ENCODE measurements at regions of chr19 and their contacts with region 1.

Region 1: DNA sequence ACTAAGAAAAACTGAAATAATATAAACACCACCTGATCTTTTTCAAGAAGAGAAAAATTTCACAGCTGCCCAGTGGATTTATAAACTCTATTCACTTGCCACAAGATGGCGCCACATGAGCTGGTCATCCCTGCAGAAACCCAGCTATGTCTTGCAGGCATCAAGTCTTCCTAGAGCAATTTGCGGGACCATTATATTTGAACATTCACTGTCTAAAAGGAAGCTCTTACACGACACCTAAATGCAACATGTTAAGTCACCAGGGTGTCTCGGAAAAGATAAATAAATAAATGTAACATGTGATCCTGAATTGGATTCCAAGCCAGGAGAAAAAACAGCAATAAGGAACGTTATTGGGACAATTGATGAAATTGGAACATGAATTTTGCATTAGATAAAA is 20.3 kb upstream of the AKT2 start:
- DNase-seq: peak; percentile 82
- H3K4me3 ChIP-seq: no peak overlapping the region
- H3K27ac ChIP-seq: no peak overlapping the region
- H3K4me1 ChIP-seq: no peaks in the 10 kb centered on the region
- H3K27me3 ChIP-seq: no peaks in the 10 kb centered on the region
- CTCF ChIP-seq: peak; percentile 66 to 68
- POLR2A ChIP-seq: no peak

Region 2: GRCh38 chr19:40285353-40286234 is 19.8 kb before region 1 on chr19:
- CTCF ChIA-PET with region 1: interaction called, 12 read pairs
- POLR2A ChIA-PET with region 1: no interaction called
- dilution Hi-C with region 1: no loop called
- intact Hi-C with region 1: no loop called
- DNase-seq: peak; percentile 100
- H3K4me3 ChIP-seq: peak overlapping the region in 2 of 3 experiments; percentile 40 to 86
- H3K27ac ChIP-seq: peak overlapping the region; percentile 76
- H3K4me1 ChIP-seq: peaks cover 11% of the 10 kb centered on the region
- H3K27me3 ChIP-seq: no peaks in the 10 kb centered on the region
- CTCF ChIP-seq: no peak
- POLR2A ChIP-seq: peak; percentile 43

Region 3: DNA sequence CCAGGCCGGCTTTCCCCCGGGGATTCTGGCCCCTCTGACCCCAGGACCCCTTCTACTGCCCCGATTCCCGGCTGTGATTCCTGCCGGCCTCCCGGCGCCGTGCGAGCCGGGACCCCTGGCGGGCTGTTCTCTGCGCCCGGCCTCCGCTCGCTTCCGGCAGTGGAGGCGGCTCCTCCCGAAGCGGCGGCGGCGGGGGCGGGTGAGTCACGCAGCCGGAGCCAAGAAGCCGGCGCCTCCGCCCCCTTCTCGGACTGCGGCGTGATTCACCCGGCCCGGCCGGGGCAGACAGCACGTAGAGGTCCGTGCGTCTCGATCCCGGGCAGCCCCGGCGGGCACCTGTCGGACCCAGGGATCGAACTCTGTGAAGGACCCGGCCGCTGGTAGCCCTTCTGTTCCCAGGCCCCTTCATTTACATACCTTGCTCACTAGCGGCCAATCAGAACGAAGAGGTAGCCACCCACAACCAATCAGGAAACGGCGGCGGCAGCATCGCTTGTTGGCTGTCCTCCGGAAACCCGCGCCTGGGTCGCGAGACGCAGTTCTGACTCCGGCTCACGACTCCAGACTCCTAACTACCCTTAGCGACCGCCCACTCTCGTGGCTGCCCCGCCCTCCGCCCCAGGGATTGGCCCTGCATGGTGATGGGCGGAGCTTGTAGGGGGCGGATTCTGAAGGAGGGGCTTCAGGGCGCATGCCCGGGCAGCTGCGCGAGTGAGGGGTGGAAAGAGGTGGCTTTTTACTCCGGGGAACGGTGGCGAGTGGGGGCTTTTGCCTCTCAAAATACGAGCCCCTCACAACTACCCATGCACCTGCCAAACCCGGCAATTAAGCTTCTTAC is 120.3 kb after region 1 on chr19 and contains the start of gene SERTAD1:
- CTCF ChIA-PET with region 1: interaction called, 17 read pairs
- POLR2A ChIA-PET with region 1: interaction called, 6 read pairs
- dilution Hi-C with region 1: no loop called
- intact Hi-C with region 1: no loop called
- DNase-seq: peak; percentile 99
- H3K4me3 ChIP-seq: peak within 1 kb of the TSS; percentile 80 to 95 (median 93)
- H3K27ac ChIP-seq: peak within 1 kb of the TSS; percentile 95
- H3K4me1 ChIP-seq: peaks cover 19% of the 10 kb centered on the region
- H3K27me3 ChIP-seq: no peaks in the 10 kb centered on the region
- CTCF ChIP-seq: peak; percentile 40 to 74
- POLR2A ChIP-seq: peak; percentile 99
- total RNA-seq, gene SERTAD1: 8.8 and 10.0 TPM in 2 replicates

Region 4: DNA sequence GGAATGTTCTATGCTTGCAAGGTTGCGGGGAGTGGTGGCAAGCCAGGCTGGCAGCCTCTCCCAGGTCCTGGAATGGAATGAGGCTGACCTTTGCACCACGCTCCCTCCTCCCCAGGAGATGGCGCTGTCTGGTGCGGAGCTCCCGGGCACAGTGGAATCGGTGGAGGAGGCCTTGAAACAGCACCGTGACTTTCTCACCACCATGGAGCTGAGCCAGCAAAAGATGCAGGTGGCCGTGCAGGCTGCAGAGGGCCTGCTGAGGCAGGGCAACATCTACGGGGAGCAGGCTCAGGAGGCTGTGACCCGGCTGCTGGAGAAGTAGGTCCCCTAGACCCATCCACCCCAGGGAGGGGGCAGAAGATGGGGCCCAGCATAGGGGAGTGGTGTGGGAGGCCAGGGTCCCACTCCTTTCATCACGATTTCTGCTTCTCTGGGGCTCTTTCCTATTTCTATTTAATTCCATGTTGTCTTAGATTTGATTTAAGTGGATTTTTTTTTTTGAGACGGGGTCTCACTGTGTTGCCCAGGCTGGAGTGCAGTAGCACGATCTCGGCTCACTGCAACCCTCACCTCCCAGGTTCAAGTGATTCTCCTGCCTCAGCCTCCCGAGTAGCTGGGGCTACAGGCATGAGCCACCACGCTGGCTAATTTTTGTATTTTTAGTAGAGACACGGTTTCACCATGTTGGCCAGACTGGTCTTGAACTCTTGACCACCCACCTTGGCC is 218.1 kb after region 1 on chr19:
- CTCF ChIA-PET with region 1: interaction called, 32 read pairs
- POLR2A ChIA-PET with region 1: no interaction called
- dilution Hi-C with region 1: no loop called
- intact Hi-C with region 1: loop called (anchors 1 kb)
- DNase-seq: peak; percentile 49
- H3K4me3 ChIP-seq: no peak overlapping the region
- H3K27ac ChIP-seq: no peak overlapping the region
- H3K4me1 ChIP-seq: no peaks in the 10 kb centered on the region
- H3K27me3 ChIP-seq: peaks cover 2 to 7% of the 10 kb centered on the region in 2 experiments
- CTCF ChIP-seq: peak; percentile 67 to 84
- POLR2A ChIP-seq: no peak

Region 5: GRCh38 chr19:40598121-40598917 is 292.9 kb after region 1 on chr19:
- CTCF ChIA-PET with region 1: interaction called, 21 read pairs
- POLR2A ChIA-PET with region 1: no interaction called
- dilution Hi-C with region 1: no loop called
- intact Hi-C with region 1: loop called (anchors 1 kb)
- DNase-seq: peak; percentile 87
- H3K4me3 ChIP-seq: peak overlapping the region; percentile 1 to 22 (median 5)
- H3K27ac ChIP-seq: no peak overlapping the region
- H3K4me1 ChIP-seq: peaks cover 42% of the 10 kb centered on the region
- H3K27me3 ChIP-seq: peaks cover 4 to 6% of the 10 kb centered on the region in 2 experiments
- CTCF ChIP-seq: peak; percentile 95 to 98
- POLR2A ChIP-seq: peak; percentile 39

Region 6: GRCh38 chr19:40640744-40641143 is 335.3 kb after region 1 on chr19:
- CTCF ChIA-PET with region 1: interaction called, 35 read pairs
- POLR2A ChIA-PET with region 1: no interaction called
- dilution Hi-C with region 1: no loop called
- intact Hi-C with region 1: no loop called
- DNase-seq: peak; percentile 19
- H3K4me3 ChIP-seq: no peak overlapping the region
- H3K27ac ChIP-seq: peak overlapping the region; percentile 10
- H3K4me1 ChIP-seq: peaks cover 14% of the 10 kb centered on the region
- H3K27me3 ChIP-seq: no peaks in the 10 kb centered on the region
- CTCF ChIP-seq: no peak
- POLR2A ChIP-seq: no peak